Activated B cell treated with CpG ODN at 0.5 μM for 24 hours (primary cell): ENCODE measurements at regions of chrX and their contacts with region 1.

Region 1: GRCh38 chrX:23756157-23756559 is 13.1 kb upstream of the ACOT9 start:
- DNase-seq: peak; percentile 18
- ATAC-seq: peak; percentile 64
- H3K4me3 Mint-ChIP-seq: no peak overlapping the region
- H3K27ac Mint-ChIP-seq: peak overlapping the region; percentile 35
- H3K4me1 Mint-ChIP-seq: peaks cover 3% of the 10 kb centered on the region
- H3K27me3 Mint-ChIP-seq: no peaks in the 10 kb centered on the region
- CTCF ChIP-seq: peak; percentile 26

Region 2: GRCh38 chrX:22629105-22629725 is 1126.9 kb before region 1 on chrX:
- CTCF ChIA-PET with region 1: no interaction called
- POLR2A ChIA-PET with region 1: no interaction called
- intact Hi-C with region 1: no loop called
- DNase-seq: no peak
- ATAC-seq: no peak
- H3K4me3 Mint-ChIP-seq: no peak overlapping the region
- H3K27ac Mint-ChIP-seq: no peak overlapping the region
- H3K4me1 Mint-ChIP-seq: no peaks in the 10 kb centered on the region
- H3K27me3 Mint-ChIP-seq: peaks cover 1% of the 10 kb centered on the region
- CTCF ChIP-seq: no peak

Region 3: DNA sequence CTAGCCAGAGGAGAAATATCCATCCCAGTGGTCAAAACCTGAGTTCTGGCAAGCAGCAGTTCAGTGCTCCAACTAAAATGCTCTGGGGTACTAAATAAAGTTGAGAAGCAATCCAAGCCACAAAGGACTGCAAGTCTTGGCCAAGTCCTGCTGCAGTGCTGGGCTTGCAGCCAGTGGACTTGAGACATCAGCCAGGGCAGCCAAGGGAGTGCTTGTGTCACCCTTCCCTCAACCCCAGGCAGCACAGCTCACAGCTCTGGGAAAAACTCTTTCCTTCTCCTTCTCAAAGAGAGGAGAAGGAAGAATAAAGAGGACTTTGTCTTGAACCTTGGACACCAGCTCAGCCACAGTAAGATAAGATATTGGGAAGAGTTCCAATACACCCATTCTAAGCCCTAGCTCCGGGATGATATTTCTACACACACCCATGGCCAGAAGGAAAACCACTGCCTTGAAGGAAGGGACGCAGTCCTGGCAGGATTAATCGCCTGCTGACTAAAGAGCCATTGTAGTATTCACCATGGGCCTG is 321.7 kb before region 1 on chrX:
- CTCF ChIA-PET with region 1: no interaction called
- POLR2A ChIA-PET with region 1: no interaction called
- intact Hi-C with region 1: no loop called
- DNase-seq: no peak
- ATAC-seq: no peak
- H3K4me3 Mint-ChIP-seq: no peak overlapping the region
- H3K27ac Mint-ChIP-seq: no peak overlapping the region
- H3K4me1 Mint-ChIP-seq: no peaks in the 10 kb centered on the region
- H3K27me3 Mint-ChIP-seq: no peaks in the 10 kb centered on the region
- CTCF ChIP-seq: no peak

Region 4: GRCh38 chrX:23478056-23478455 is 278.1 kb before region 1 on chrX:
- CTCF ChIA-PET with region 1: no interaction called
- POLR2A ChIA-PET with region 1: no interaction called
- intact Hi-C with region 1: no loop called
- DNase-seq: no peak
- ATAC-seq: no peak
- H3K4me3 Mint-ChIP-seq: no peak overlapping the region
- H3K27ac Mint-ChIP-seq: no peak overlapping the region
- H3K4me1 Mint-ChIP-seq: no peaks in the 10 kb centered on the region
- H3K27me3 Mint-ChIP-seq: no peaks in the 10 kb centered on the region
- CTCF ChIP-seq: no peak

Region 5: GRCh38 chrX:23694606-23695005 is 61.6 kb before region 1 on chrX:
- CTCF ChIA-PET with region 1: no interaction called
- POLR2A ChIA-PET with region 1: no interaction called
- intact Hi-C with region 1: loop called (anchors 2 kb)
- DNase-seq: no peak
- ATAC-seq: peak; percentile 78
- H3K4me3 Mint-ChIP-seq: no peak overlapping the region
- H3K27ac Mint-ChIP-seq: no peak overlapping the region
- H3K4me1 Mint-ChIP-seq: no peaks in the 10 kb centered on the region
- H3K27me3 Mint-ChIP-seq: no peaks in the 10 kb centered on the region
- CTCF ChIP-seq: no peak

Region 6: DNA sequence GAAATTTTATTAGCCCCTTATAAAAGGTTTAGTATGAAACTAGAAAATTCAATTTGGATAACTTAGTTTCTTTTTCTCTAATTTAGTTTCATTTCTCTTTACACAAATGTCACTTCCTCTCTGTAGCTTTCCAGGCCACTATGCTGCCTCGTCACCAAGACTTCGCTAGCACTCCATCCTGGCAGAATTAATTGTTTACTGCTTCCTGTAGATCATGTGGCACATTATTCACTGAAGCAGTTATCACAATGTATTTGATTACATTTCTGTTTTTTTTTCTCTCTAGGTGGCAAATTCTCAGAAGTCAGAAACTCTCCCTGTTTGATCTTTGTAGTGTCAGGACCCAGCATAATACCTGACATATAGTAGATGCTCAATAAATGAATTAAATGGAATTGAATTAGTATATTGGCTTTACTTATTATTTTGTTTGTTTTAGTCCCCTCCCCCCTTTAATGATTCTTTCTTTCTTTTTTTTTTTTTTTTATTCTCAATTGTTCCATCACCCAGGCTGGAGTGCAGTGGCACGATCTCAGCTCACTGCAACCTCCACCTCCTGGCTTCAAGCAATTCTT is 17.5 kb after region 1 on chrX:
- CTCF ChIA-PET with region 1: no interaction called
- POLR2A ChIA-PET with region 1: interaction called, 5 read pairs
- intact Hi-C with region 1: loop called (anchors 1 kb)
- DNase-seq: no peak
- ATAC-seq: peak; percentile 88
- H3K4me3 Mint-ChIP-seq: peak overlapping the region; percentile 75
- H3K27ac Mint-ChIP-seq: peak overlapping the region; percentile 96
- H3K4me1 Mint-ChIP-seq: peaks cover 21% of the 10 kb centered on the region
- H3K27me3 Mint-ChIP-seq: no peaks in the 10 kb centered on the region
- CTCF ChIP-seq: no peak